ENCODE measurements at regions of chr22 and their contacts with region 1.

Region 1: DNA sequence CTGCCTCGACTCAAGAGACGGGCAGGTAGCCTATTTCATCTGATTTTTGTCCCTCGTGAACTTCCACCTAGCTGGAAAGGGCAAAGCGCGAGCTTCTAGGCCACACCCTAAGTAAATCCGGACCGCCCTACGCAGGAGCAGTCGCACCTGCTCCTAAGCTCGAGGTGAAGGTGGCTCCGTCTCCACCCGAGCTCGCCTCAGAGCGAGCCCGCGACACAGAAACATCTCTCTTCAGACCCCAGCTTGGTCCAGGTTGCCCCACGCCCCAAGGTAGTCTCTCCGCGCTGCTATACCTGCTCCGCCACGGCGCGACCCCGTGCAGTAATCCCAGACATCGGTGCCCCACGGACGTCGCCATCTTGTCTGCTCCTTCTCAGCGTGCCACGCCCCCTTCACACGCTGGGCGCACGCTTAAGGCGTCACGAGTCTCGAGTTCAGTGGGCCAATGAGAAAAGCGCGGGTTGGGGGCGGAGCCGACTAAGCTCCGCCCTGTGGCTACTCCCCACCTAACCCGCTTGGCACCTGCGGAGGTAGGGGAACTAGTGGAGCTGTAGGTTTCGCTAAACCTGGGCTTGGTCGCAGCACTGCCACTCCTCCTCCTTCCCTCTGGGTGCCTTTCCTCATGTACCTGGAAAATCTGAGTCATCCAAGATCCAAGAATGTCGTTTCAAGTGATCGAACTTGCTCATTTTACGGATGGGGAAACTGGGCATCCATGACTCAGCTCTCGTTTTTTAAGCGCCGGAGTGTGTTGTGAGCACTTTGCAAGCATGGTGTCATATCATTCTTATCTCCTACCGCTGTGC is at the start of gene PISD:
- DNase-seq: peak; percentile 99
- ATAC-seq: peak; percentile 98
- H3K4me3 ChIP-seq: peak within 1 kb of the TSS; percentile 71 to 97 (median 86)
- H3K4me3 Mint-ChIP-seq: peak within 1 kb of the TSS; percentile 96
- H3K27ac ChIP-seq: peak within 1 kb of the TSS; percentile 57 to 81
- H3K27ac Mint-ChIP-seq: peak within 1 kb of the TSS; percentile 97
- H3K4me1 ChIP-seq: peaks cover 12 to 23% of the 10 kb centered on the region in 2 donors
- H3K4me1 Mint-ChIP-seq: peaks cover 31% of the 10 kb centered on the region
- H3K27me3 ChIP-seq: no peaks in the 10 kb centered on the region
- H3K27me3 Mint-ChIP-seq: no peaks in the 10 kb centered on the region
- CTCF ChIP-seq: no peak
- total RNA-seq, gene PISD: 52.5 and 57.2 TPM in 2 replicates

Region 2: DNA sequence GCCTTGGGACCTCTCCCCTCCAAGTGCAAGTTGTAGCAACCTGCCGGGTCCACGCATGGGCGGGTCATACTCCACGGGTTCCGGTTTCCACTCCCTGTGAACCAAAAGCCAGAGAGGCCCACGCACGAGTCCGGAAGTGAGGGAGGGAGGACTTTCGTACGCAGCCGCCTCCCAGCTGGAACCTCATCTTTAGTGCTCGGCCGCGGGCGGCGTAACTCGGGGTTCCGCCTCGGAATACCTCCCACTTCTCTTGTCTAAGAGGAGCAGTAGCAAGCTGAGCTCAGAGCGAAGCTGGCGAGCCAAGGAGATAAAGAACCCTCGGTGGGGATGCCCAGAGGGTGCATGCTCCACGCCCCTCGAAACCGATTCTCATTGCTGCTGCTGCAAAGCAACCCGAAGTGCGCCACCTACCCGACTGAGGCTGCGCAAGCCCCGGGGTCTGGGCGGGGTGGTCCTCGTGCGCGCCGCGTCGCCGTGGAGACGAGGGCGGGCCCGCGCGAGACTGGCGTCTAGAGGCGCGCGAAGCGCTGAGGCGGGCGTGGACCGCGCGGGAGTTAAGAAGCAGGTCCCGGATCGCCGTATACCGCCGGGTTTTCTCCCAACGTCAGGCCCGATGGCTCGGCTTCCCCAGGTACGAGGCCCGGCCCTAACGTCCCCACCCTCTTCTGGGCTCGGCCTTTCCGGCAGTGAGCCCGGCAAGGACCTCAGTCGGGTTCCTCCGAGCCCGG is 165.9 kb before region 1 on chr22 and contains the start of gene SFI1:
- CTCF ChIA-PET with region 1: no interaction called
- POLR2A ChIA-PET with region 1: no interaction called
- intact Hi-C with region 1: loop called (anchors 10 kb)
- DNase-seq: peak; percentile 97
- ATAC-seq: peak; percentile 87
- H3K4me3 ChIP-seq: peak within 1 kb of the TSS; percentile 71 to 88 (median 80)
- H3K4me3 Mint-ChIP-seq: peak within 1 kb of the TSS; percentile 97
- H3K27ac ChIP-seq: peak within 1 kb of the TSS; percentile 83 to 85
- H3K27ac Mint-ChIP-seq: peak within 1 kb of the TSS; percentile 97
- H3K4me1 ChIP-seq: peaks cover 25 to 45% of the 10 kb centered on the region in 2 donors
- H3K4me1 Mint-ChIP-seq: peaks cover 39% of the 10 kb centered on the region
- H3K27me3 ChIP-seq: no peaks in the 10 kb centered on the region
- H3K27me3 Mint-ChIP-seq: no peaks in the 10 kb centered on the region
- CTCF ChIP-seq: peak; percentile 34
- total RNA-seq, gene SFI1: 182 and 191 TPM in 2 replicates

Region 3: GRCh38 chr22:31602259-31602952 is 59.6 kb before region 1 on chr22:
- CTCF ChIA-PET with region 1: no interaction called
- POLR2A ChIA-PET with region 1: no interaction called
- intact Hi-C with region 1: no loop called
- DNase-seq: no peak
- ATAC-seq: no peak
- H3K4me3 ChIP-seq: no peak overlapping the region
- H3K4me3 Mint-ChIP-seq: no peak overlapping the region
- H3K27ac ChIP-seq: no peak overlapping the region
- H3K27ac Mint-ChIP-seq: no peak overlapping the region
- H3K4me1 ChIP-seq: no peaks in the 10 kb centered on the region
- H3K4me1 Mint-ChIP-seq: no peaks in the 10 kb centered on the region
- H3K27me3 ChIP-seq: no peaks in the 10 kb centered on the region
- H3K27me3 Mint-ChIP-seq: no peaks in the 10 kb centered on the region
- CTCF ChIP-seq: no peak

Region 4: GRCh38 chr22:31637938-31638618 is 24.0 kb before region 1 on chr22:
- CTCF ChIA-PET with region 1: interaction called, 12 read pairs
- POLR2A ChIA-PET with region 1: interaction called, 10 read pairs
- intact Hi-C with region 1: loop called (anchors 1 kb)
- DNase-seq: peak; percentile 67
- ATAC-seq: peak; percentile 68
- H3K4me3 ChIP-seq: peak overlapping the region; percentile 17 to 84 (median 38)
- H3K4me3 Mint-ChIP-seq: peak overlapping the region; percentile 90
- H3K27ac ChIP-seq: peak overlapping the region; percentile 64 to 86
- H3K27ac Mint-ChIP-seq: peak overlapping the region; percentile 92
- H3K4me1 ChIP-seq: peaks cover 31 to 46% of the 10 kb centered on the region in 2 donors
- H3K4me1 Mint-ChIP-seq: peaks cover 50% of the 10 kb centered on the region
- H3K27me3 ChIP-seq: no peaks in the 10 kb centered on the region
- H3K27me3 Mint-ChIP-seq: no peaks in the 10 kb centered on the region
- CTCF ChIP-seq: no peak

Region 5: DNA sequence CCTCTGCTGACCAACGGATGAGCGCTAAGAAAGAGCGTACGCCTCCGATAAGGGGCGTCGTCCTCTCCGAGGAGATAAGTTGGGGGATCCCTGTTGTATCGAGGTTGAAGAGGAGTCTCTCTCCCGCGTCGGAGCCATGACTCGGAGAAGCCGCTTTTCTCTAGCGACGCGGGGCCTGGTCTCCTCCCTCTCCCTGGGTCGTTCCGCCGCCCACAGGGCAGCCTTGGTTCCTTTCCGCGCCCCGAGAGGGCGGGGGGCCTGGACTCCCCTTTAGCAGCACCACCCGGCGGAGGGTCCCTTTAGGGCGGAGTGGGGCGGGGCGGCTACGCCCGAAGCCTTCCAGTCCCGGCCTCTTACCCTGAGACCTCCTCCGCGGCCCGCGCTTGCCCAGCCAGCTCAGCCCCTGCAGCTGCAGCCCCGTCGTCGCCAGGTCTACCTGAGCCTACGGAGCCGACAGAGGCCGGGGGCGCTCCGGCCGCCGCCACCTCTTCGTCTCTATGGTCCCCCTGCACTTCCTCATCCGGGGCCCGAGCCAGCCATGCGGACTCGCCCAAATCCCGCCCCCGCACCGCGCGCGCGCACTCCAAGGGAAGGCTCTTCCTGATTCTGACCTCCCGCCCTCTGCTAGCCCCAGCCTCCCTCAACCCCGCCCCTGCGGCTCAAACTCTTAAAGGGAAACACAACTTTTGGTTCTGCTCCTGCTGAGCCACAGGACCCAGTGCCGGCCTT is 87.7 kb after region 1 on chr22 and contains the start of gene PRR14L:
- CTCF ChIA-PET with region 1: interaction called, 4 read pairs
- POLR2A ChIA-PET with region 1: interaction called, 7 read pairs
- intact Hi-C with region 1: loop called (anchors 1 kb)
- DNase-seq: peak; percentile 99
- ATAC-seq: peak; percentile 74
- H3K4me3 ChIP-seq: peak within 1 kb of the TSS; percentile 81 to 95 (median 83)
- H3K4me3 Mint-ChIP-seq: peak within 1 kb of the TSS; percentile 95
- H3K27ac ChIP-seq: peak within 1 kb of the TSS; percentile 72 to 93
- H3K27ac Mint-ChIP-seq: peak within 1 kb of the TSS; percentile 99
- H3K4me1 ChIP-seq: peaks cover 41 to 43% of the 10 kb centered on the region in 2 donors
- H3K4me1 Mint-ChIP-seq: peaks cover 52% of the 10 kb centered on the region
- H3K27me3 ChIP-seq: no peaks in the 10 kb centered on the region
- H3K27me3 Mint-ChIP-seq: no peaks in the 10 kb centered on the region
- CTCF ChIP-seq: peak; percentile 17
- total RNA-seq, gene PRR14L: 69.6 and 78.5 TPM in 2 replicates

Region 6: GRCh38 chr22:31881201-31881600 is 219.1 kb after region 1 on chr22:
- CTCF ChIA-PET with region 1: no interaction called
- POLR2A ChIA-PET with region 1: no interaction called
- intact Hi-C with region 1: no loop called
- DNase-seq: no peak
- ATAC-seq: no peak
- H3K4me3 ChIP-seq: no peak overlapping the region
- H3K4me3 Mint-ChIP-seq: no peak overlapping the region
- H3K27ac ChIP-seq: no peak overlapping the region
- H3K27ac Mint-ChIP-seq: no peak overlapping the region
- H3K4me1 ChIP-seq: no peaks in the 10 kb centered on the region
- H3K4me1 Mint-ChIP-seq: no peaks in the 10 kb centered on the region
- H3K27me3 ChIP-seq: no peaks in the 10 kb centered on the region
- H3K27me3 Mint-ChIP-seq: no peaks in the 10 kb centered on the region
- CTCF ChIP-seq: no peak

Region 7: DNA sequence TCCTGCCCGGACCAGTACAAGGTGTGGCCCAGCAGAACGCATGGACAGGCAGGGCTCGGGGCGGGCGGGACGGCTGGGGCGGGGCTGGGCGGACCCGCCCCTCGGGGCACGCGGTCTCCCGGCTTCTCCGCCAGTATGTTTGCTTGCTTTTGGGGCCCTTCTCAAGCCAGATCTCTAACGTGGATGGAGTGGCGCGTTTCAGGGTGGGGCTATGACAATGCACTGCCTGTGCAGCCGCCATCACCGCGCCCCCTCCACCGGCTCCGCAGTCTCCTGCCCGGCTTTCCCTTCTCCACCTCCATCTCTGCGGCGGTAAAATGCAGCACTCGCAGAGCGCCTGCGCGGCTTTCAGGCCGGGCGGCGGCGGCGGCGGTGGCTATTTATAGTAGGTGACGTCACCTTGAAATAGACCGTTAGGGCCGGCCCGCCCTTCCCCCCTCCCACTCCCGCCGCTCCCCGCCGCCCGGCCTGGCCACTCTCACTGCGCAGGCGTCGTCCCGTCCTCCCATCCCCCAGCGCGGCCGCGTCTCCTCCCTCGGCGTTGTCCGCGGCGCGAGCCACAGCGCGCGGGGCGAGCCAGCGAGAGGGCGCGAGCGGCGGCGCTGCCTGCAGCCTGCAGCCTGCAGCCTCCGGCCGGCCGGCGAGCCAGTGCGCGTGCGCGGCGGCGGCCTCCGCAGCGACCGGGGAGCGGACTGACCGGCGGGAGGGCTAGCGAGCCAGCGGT is 282.1 kb after region 1 on chr22 and contains the start of gene YWHAH:
- CTCF ChIA-PET with region 1: interaction called, 59 read pairs
- POLR2A ChIA-PET with region 1: interaction called, 3 read pairs
- intact Hi-C with region 1: loop called (anchors 1 kb)
- DNase-seq: peak; percentile 96
- ATAC-seq: peak; percentile 85
- H3K4me3 ChIP-seq: peak within 1 kb of the TSS; percentile 67 to 78 (median 75)
- H3K4me3 Mint-ChIP-seq: no peak within 1 kb of the TSS
- H3K27ac ChIP-seq: peak within 1 kb of the TSS; percentile 82 to 85
- H3K27ac Mint-ChIP-seq: peak within 1 kb of the TSS; percentile 97
- H3K4me1 ChIP-seq: peaks cover 29 to 31% of the 10 kb centered on the region in 2 donors
- H3K4me1 Mint-ChIP-seq: peaks cover 18% of the 10 kb centered on the region
- H3K27me3 ChIP-seq: no peaks in the 10 kb centered on the region
- H3K27me3 Mint-ChIP-seq: no peaks in the 10 kb centered on the region
- CTCF ChIP-seq: no peak
- total RNA-seq, gene YWHAH: 46.6 and 51.1 TPM in 2 replicates

Region 8: DNA sequence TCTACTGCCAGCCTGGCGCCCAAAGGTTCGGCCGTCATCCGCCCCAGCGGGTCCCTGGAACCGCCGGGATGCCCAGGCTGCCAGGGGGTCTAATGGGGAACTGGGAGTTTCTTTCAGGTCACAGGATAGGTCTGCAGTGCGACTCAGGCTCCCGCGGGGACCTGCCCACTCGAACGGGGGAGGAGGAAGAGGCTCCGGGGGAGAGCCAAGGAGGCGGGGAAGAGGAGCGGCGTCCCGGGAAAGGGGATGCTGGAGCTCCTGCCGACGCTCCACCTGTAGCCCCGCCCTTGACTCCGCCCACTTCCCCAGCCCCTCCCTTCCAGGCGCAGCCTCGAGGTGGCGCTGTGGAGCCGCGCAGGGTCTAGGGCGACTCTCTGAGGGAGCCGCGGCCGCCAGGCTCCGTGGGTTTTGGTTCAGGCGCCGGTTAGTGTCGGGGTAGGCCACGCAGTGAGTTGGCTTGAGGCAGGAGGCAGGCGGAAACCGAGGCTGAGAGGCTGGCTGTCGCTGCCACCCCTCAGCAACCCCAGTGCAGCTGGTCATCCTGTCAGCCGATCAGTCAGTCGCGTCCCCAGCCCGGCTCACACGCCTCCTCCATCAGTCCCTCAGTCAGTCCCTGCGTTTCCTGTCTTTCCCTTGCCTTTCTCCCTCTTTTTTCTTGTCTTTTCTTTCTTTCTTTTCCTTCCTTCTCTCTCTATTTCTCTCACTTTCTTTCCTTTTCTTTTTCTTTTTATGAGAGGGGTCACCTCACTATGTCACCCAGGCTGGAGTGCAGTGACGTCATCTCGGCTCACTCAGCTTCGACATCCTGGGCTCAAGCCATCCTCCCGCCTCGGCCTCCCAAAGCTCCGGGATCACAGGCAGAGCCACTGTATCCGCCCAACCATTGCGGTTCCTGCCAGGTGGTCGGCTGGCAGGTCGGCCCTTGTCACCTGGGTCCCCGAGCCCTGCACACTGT is 308.7 kb after region 1 on chr22:
- CTCF ChIA-PET with region 1: interaction called, 7 read pairs
- POLR2A ChIA-PET with region 1: interaction called, 8 read pairs
- intact Hi-C with region 1: loop called (anchors 1 kb)
- DNase-seq: peak; percentile 89
- ATAC-seq: peak; percentile 93
- H3K4me3 ChIP-seq: peak overlapping the region in 4 of 5 experiments; percentile 33 to 72 (median 48)
- H3K4me3 Mint-ChIP-seq: peak overlapping the region; percentile 88
- H3K27ac ChIP-seq: peak overlapping the region; percentile 9 to 37
- H3K27ac Mint-ChIP-seq: peak overlapping the region; percentile 41
- H3K4me1 ChIP-seq: peaks cover 16 to 21% of the 10 kb centered on the region in 2 donors
- H3K4me1 Mint-ChIP-seq: peaks cover 19% of the 10 kb centered on the region
- H3K27me3 ChIP-seq: peaks cover 0 to 4% (median 0%) of the 10 kb centered on the region in 4 experiments
- H3K27me3 Mint-ChIP-seq: peaks cover under 1% of the 10 kb centered on the region
- CTCF ChIP-seq: peak; percentile 87

Measured in B cell (primary cell).